Posterior cingulate gyrus (tissue), 11 donors: ENCODE measurements at regions of chr5 and their contacts with region 1.

Region 1: DNA sequence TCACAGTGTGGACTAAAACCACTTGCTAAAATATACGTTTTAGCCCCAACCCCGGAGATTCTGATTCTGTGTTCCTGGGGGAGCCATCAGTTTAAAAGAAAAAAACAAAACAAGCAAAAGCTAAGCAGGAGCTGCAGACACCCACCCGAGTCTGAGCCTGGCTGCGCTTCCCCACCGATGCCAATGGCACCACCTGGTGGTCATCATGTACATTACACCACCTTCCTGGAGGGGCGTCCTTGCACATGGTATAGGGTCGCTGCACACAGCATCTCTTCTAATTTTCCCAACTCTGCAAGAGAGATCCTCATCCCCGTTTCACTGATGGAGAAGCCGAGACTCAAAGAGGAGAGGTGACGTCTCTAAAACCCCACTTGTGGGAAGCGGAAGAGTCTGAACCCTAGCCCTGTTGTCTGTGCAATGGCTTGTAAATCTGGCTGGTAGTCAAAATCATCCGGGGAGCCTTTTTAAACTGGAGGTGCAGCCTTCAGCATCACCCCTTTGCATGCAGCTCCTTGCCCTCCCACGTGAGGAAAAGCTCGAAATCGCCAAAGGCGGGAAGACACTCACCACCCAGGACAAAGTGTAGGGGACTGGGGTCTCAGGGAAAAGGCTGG is 23.1 kb upstream of the CNOT6 start:
- DNase-seq: peak in 9 of 10 donors; percentile 52 to 95 (median 75)

Region 2: DNA sequence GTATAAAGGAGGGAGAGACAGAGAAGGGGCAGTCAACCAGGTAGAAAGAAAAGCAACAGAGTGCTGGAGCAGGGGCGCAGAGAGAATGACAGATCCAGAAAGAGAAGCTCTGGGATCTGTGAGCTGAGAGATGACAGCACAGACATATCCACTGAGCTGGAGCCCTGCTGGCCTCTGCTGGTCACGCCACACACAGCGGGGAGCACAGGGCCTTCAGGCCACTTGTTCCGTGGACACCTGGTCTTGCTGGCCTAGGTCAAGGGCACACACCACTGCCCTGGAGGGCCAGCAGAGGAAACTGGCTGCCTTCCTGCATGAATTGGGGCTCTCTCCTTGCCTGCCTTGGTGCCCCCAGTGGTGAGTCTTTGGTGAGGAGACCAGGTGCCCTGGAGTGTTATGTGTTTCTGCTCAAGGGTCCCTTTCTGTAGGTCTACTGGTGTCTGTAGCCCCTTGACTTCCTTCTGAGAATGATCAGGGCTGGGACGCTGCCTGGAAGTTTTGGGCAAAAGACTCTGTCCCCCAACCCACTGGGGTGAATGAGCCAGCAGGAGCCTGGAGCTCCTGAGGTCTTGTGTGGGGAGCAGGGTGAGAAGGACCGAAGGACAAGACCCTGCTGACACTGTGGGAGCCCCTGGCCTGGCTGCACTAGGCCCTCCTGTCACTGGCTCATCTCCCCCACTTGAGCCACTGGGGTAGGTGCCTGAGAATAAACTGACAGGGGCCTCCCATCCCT is 1066.6 kb before region 1 on chr5:
- intact Hi-C with region 1: no loop called
- DNase-seq: no peak

Region 3: GRCh38 chr5:180353048-180353979 is 117.8 kb before region 1 on chr5 and contains the start of gene GFPT2:
- intact Hi-C with region 1: loop called (anchors 10 kb)
- DNase-seq: peak; percentile 76 to 98 (median 87)